Motor neuron (in vitro differentiated cells): ENCODE measurements at regions of chr12 and their contacts with region 1.

Region 1: GRCh38 chr12:95820102-95820703 is 29.6 kb upstream of the NTN4 start:
- ATAC-seq: peak in 4 of 8 experiments; percentile 57 to 75 (median 64)
- H3K4me3 ChIP-seq: no peak overlapping the region
- H3K27ac ChIP-seq: no peak overlapping the region
- H3K4me1 ChIP-seq: peaks cover 0 to 3% of the 10 kb centered on the region in 2 donors

Region 2: DNA sequence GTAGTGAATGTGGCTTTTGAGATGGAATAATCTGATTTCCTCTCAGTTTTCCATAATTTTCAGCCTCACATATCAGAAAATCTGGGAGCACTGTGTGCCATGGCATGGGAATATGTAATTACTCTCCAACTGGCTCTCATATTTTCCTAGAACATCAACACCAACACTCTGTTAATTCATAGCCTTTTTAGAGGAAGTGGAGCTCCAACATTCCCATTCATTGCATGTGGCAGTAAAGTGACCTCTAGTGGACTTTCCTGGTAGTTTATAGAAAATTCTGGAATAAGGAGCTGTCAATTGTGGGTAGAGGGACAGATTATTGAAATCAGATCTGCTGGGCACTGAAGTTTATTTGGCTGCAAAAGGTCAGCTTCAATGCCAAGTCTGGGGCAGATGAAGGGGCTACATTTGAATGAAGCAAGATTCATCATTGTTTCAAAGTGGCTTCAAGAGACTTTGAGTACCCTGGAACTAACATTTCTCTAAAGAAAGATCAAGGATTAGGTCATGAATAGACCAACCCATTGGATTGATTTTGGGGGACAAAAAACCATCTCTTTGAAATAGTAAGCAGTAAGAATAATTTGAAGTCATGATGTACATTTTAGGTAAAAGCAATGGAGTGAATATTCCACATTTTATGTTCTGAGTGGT is 245.3 kb before region 1 on chr12:
- in situ Hi-C with region 1: loop called in 7 of 9 experiments (anchors 10 to 25 kb)
- ATAC-seq: peak in 4 of 8 experiments; percentile 32 to 82 (median 72)
- H3K4me3 ChIP-seq: no peak overlapping the region
- H3K27ac ChIP-seq: no peak overlapping the region
- H3K4me1 ChIP-seq: peaks cover 5 to 10% of the 10 kb centered on the region in 2 donors

Region 3: GRCh38 chr12:95582230-95583058 is 237.8 kb before region 1 on chr12:
- in situ Hi-C with region 1: loop called in 7 of 9 experiments (anchors 10 to 25 kb)
- ATAC-seq: peak in 7 of 8 experiments; percentile 32 to 88 (median 58)
- H3K4me3 ChIP-seq: no peak overlapping the region
- H3K27ac ChIP-seq: no peak overlapping the region
- H3K4me1 ChIP-seq: no peaks in the 10 kb centered on the region

Region 4: GRCh38 chr12:95623585-95624042 is 196.6 kb before region 1 on chr12:
- in situ Hi-C with region 1: loop called in 1 of 9 experiments (anchors 10 kb)
- ATAC-seq: peak in 4 of 8 experiments; percentile 48 to 99 (median 96)
- H3K4me3 ChIP-seq: no peak overlapping the region
- H3K27ac ChIP-seq: no peak overlapping the region
- H3K4me1 ChIP-seq: peaks cover 5 to 11% of the 10 kb centered on the region in 2 donors